PC-3 (cell line): ENCODE measurements at regions of chr2 and their contacts with region 1.

Region 1: GRCh38 chr2:235050992-235051351 is 99.2 kb downstream of the SH3BP4 start:
- DNase-seq: peak; percentile 80
- ATAC-seq: peak; percentile 74
- H3K4me3 ChIP-seq: no peak overlapping the region
- H3K27ac ChIP-seq: peak overlapping the region; percentile 45
- H3K4me1 ChIP-seq: peaks cover 8% of the 10 kb centered on the region
- H3K27me3 ChIP-seq: no peaks in the 10 kb centered on the region
- CTCF ChIP-seq: peak; percentile 36; the same call in 1 of the 2 replicates

Region 2: GRCh38 chr2:234881413-234882241 is 169.3 kb before region 1 on chr2:
- CTCF ChIA-PET with region 1: no interaction called
- POLR2A ChIA-PET with region 1: no interaction called
- intact Hi-C with region 1: loop called (anchors 10 kb)
- DNase-seq: peak; percentile 93
- ATAC-seq: peak; percentile 94
- H3K4me3 ChIP-seq: peak overlapping the region; percentile 62
- H3K27ac ChIP-seq: peak overlapping the region; percentile 67
- H3K4me1 ChIP-seq: peaks cover 33% of the 10 kb centered on the region
- H3K27me3 ChIP-seq: no peaks in the 10 kb centered on the region
- CTCF ChIP-seq: peak; percentile 94